ENCODE measurements at regions of chr9 and their contacts with region 1.

Region 1: GRCh38 chr9:93159601-93160471 is 24.1 kb upstream of the WNK2 start:
- DNase-seq: peak; percentile 70
- ATAC-seq: peak; percentile 98
- H3K4me3 Mint-ChIP-seq: no peak overlapping the region
- H3K27ac Mint-ChIP-seq: no peak overlapping the region
- H3K4me1 Mint-ChIP-seq: peaks cover 7% of the 10 kb centered on the region
- H3K27me3 Mint-ChIP-seq: no peaks in the 10 kb centered on the region
- CTCF ChIP-seq: peak; percentile 88

Region 2: DNA sequence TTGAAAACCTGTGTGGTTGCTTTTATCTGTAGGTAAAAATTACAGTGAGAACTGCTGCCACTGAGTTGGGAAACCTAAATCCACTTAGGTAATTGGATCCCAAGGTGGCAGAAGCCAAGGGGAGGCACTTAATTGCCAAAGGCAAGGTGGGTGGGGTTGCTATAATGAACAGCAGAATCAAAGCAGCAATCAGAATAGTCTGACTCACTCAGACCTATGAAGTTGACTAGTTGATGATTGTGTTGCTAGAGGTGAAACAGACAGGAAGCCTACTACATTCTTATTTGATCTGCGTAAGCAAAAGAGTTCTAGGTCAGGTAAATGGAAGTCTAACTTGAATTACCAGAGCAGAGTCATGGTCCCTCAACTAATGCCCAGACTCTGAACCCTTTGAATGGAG is 377.9 kb before region 1 on chr9:
- CTCF ChIA-PET with region 1: no interaction called
- POLR2A ChIA-PET with region 1: no interaction called
- intact Hi-C with region 1: no loop called
- DNase-seq: no peak
- ATAC-seq: no peak
- H3K4me3 Mint-ChIP-seq: no peak overlapping the region
- H3K27ac Mint-ChIP-seq: no peak overlapping the region
- H3K4me1 Mint-ChIP-seq: no peaks in the 10 kb centered on the region
- H3K27me3 Mint-ChIP-seq: no peaks in the 10 kb centered on the region
- CTCF ChIP-seq: no peak

Region 3: GRCh38 chr9:92954049-92954861 is 205.6 kb before region 1 on chr9:
- CTCF ChIA-PET with region 1: no interaction called
- POLR2A ChIA-PET with region 1: no interaction called
- intact Hi-C with region 1: loop called (anchors 2 kb)
- DNase-seq: no peak
- ATAC-seq: peak; percentile 66
- H3K4me3 Mint-ChIP-seq: peak overlapping the region; percentile 49
- H3K27ac Mint-ChIP-seq: no peak overlapping the region
- H3K4me1 Mint-ChIP-seq: peaks cover 20% of the 10 kb centered on the region
- H3K27me3 Mint-ChIP-seq: peaks cover 17% of the 10 kb centered on the region
- CTCF ChIP-seq: no peak

Region 4: DNA sequence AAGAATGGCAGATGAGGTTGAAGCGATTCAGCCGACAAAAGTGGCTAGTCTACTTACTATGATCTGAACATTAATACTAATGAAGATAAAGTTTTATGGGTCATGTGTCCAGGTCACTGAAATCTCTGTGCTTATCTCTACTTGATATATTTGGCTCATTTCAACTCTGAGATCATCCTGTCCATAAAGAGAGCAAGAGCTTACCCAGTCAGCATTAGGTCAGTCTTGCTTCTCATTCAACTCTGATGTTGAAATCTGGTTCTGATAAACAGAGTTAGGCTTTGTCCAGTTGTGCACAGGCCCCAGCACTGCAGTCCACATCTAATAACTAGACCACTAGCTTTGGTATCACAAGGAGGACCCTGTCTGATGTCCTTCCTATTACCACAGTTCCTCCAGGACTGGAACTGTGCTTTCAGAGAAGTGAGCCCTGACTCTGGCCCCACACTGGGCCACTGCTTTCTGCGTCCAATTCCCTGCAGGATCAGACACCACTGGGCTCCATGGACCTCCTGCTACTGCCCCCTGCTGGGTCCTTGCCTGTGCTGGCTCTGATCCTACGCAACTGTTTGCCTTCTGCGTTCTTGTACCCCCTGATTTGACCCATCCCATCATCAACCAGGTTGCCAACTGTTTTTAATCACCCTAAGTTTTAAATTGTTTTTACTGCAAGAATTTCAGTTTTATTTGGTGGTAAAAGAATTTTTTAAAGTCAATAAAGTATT is 268.0 kb after region 1 on chr9:
- CTCF ChIA-PET with region 1: no interaction called
- POLR2A ChIA-PET with region 1: no interaction called
- intact Hi-C with region 1: loop called (anchors 10 kb)
- DNase-seq: no peak
- ATAC-seq: no peak
- H3K4me3 Mint-ChIP-seq: no peak overlapping the region
- H3K27ac Mint-ChIP-seq: no peak overlapping the region
- H3K4me1 Mint-ChIP-seq: peaks cover 2% of the 10 kb centered on the region
- H3K27me3 Mint-ChIP-seq: peaks cover 20% of the 10 kb centered on the region
- CTCF ChIP-seq: no peak